BJ (cell line): ENCODE measurements at regions of chr1 and their contacts with region 1.

Region 1: DNA sequence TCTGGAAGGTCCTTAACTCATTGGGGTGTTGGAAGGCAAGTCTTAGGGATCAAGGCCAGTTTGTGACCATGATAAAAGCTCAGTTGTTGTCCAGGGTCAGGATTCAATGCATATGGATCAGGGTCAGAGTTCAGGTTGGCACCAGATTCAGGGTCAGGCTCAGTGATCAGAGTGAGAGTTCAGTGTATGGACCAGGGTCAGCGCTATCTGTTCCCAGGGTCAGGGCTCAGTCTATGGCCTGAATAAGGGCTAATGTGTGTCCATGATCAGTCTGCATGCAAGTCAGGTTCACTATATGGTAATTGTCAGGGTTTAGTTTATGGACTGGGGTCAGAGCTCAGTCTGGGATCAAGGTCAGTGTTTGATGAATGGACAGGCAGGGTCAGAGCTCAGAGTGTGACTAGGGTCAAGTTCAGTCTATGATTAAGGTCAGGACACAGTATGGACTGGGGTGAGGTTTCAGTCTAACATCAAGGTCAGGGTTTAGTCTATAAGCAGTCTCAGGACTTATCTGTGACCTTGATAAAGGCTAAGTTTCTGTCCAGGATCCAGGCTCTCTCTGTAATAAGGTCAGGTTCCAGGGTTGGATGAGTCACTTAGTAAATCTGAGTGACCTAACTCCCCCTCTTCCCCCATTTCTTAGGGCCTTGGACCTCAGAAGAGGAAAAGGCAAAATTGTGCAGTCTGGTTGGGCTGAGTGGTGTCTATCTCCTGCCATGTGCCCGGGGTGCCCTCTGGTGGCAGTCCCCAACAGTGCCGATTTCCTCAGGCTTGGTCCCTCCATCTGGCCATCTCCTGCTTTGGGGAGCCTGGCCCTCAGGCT is 23.8 kb downstream of the KNCN start:
- DNase-seq: no peak
- H3K4me3 ChIP-seq: no peak overlapping the region
- H3K27me3 ChIP-seq: peaks cover 35% of the 10 kb centered on the region
- CTCF ChIP-seq: peak; percentile 97

Region 2: GRCh38 chr1:46487818-46488218 is 39.9 kb before region 1 on chr1:
- CTCF ChIA-PET with region 1: interaction called, 96 read pairs
- POLR2A ChIA-PET with region 1: no interaction called
- DNase-seq: no peak
- H3K4me3 ChIP-seq: no peak overlapping the region
- H3K27me3 ChIP-seq: peaks cover 76% of the 10 kb centered on the region
- CTCF ChIP-seq: peak; percentile 23; the same call in 1 of the 2 replicates

Region 3: DNA sequence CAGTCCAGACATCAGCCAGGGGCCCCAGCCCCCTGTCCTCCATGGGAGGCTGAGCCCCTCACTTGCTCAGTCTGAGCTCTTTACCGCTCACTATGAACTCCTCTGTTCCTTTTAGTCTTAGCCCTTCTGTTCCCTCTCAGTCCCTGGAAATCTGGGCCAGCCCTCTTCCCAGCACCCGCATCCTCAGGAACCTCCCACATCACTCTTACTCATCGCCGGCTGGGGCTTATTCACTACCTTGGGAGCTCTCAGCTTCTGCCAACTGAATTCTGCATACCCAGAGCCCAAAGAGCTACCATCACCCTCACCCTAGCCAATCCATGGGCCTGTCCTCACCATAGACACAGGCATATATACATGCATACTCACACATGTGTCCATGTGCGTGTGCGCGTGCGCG is 12.3 kb after region 1 on chr1:
- CTCF ChIA-PET with region 1: interaction called, 38 read pairs
- POLR2A ChIA-PET with region 1: no interaction called
- DNase-seq: no peak
- H3K4me3 ChIP-seq: no peak overlapping the region
- H3K27me3 ChIP-seq: peaks cover 21% of the 10 kb centered on the region
- CTCF ChIP-seq: no peak

Region 4: DNA sequence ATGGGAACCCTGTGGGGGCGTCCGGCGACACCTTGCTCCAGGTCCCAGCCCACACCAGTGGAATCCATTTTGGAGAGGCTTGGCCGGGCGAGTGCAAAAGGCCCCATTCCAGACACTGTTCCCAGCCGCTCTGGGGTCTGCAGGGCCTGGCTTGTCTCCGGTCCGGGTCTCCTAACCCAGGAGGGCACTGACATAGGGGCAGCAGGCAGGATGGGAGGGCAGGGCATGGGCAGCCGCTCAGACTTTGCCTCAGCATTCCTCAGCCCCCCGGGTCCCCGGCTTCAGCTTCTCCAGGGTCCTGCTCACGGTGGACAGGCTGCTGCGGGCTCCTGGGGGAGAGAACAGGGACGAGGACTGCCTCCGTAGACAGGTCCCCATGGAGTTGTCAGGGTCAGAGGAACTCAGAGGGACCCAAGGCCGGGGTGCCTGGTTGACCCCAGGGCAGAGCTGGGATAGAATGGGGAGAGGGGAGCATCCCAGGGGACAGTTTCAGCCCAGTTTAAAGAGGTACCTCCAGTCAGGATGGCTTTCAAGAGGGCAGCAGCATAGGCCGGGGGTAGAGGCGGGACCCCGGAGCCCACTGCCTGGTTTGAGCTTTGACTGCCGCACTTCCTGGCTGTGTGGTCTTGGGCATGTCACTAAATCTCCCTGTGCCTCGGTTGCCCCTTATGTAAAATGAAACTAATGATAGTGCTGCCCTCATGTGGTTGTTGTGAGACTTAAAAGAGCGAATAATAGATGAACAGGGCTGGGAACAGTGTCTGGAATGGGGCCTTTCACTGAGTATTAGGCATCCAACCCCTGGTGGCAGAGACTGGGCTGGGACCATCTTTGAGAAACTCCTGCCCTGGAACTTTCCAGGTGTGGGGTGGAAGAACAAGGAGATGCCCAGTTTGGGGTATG is 20.0 kb after region 1 on chr1:
- CTCF ChIA-PET with region 1: interaction called, 38 read pairs
- POLR2A ChIA-PET with region 1: no interaction called
- DNase-seq: no peak
- H3K4me3 ChIP-seq: no peak overlapping the region
- H3K27me3 ChIP-seq: peaks cover 32% of the 10 kb centered on the region
- CTCF ChIP-seq: peak; percentile 53

Region 5: DNA sequence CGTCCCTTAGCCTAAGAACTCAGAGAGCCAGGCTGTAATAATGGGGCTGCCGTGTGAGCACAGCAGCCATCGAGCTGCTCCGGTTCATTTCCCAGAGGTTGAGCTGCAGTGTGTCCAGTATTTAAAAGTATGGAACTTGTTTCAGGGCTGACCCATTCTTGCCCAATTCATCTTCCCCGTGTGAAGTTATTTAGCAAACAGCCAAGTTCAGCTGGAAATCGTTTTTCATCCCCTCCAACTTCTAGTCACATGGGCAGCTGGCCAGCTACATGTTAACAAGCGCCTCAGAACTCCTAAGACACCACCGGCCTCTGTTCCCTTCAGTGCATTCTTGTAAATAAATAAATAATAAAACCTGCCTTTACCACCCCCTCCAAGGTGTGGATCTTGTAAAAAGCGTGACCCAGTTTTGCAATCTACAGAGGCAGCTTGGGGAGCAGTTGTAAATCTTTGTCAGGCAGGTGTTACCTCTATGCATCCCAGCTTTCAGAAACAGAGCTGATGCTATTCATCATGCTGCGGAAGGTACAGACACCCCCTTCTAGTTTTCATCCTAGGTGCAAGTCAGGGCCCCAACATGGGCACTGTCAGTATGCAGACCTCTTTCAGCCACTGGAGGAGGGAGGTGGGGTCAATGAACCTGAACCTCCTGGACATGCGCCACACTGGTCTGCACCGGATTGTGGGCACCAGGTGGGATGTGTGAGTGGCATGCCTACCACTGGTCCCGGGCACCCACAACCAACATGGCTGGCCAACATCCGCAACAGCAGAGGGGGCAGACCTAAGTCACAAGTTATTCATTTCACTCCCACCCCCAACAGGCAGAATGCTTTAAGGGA is 42.4 kb after region 1 on chr1:
- CTCF ChIA-PET with region 1: no interaction called
- POLR2A ChIA-PET with region 1: no interaction called
- DNase-seq: no peak
- H3K4me3 ChIP-seq: no peak overlapping the region
- H3K27me3 ChIP-seq: no peaks in the 10 kb centered on the region
- CTCF ChIP-seq: no peak

Region 6: DNA sequence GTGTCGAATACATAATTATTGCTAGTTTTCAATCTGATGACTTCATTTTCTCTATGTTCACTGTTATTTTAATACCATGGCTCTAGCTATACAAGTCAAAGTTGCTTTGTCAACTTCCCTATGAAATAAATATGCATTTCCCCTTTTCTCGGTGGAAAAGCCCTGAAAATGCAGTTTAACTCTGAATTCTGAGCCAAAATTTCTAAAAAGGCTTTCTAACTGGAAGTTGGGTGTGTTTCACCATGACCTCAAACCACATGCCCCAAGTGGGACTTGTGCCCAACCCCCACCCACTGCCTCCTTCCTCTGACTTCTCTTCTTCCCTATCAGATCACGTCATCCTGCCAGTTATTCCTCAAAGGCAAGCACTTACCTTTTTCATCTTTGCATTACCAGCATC is 67.4 kb after region 1 on chr1:
- CTCF ChIA-PET with region 1: no interaction called
- POLR2A ChIA-PET with region 1: no interaction called
- DNase-seq: no peak
- H3K4me3 ChIP-seq: no peak overlapping the region
- H3K27me3 ChIP-seq: no peaks in the 10 kb centered on the region
- CTCF ChIP-seq: no peak

Region 7: DNA sequence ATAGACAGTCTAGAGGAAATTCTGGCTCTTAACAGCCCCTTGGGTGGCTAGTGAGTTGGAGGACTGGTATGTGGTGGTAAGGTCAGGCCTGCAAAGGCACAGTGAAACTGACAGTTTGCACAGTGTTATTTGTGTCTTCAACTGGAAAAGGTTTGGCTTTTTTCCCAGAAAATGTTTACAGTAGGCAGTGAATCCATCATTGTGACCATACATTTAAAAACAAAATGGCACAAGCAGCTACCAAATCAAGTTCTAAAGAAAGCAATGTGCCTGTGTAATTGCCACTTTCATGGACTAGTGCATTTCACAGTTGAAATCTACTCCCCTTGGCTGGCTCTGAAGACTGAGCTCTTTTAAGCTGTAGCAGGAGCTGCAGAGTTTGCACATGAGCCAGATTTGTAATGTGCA is 115.7 kb after region 1 on chr1:
- CTCF ChIA-PET with region 1: no interaction called
- POLR2A ChIA-PET with region 1: no interaction called
- DNase-seq: peak; percentile 59
- H3K4me3 ChIP-seq: no peak overlapping the region
- H3K27me3 ChIP-seq: no peaks in the 10 kb centered on the region
- CTCF ChIP-seq: no peak

Region 8: GRCh38 chr1:46724991-46725735 is 197.5 kb after region 1 on chr1:
- CTCF ChIA-PET with region 1: interaction called, 23 read pairs
- POLR2A ChIA-PET with region 1: no interaction called
- DNase-seq: peak; percentile 22
- H3K4me3 ChIP-seq: no peak overlapping the region
- H3K27me3 ChIP-seq: peaks cover 4% of the 10 kb centered on the region
- CTCF ChIP-seq: peak; percentile 90